HCT116 (cell line): ENCODE measurements at regions of chr12 and their contacts with region 1.

Region 1: GRCh38 chr12:3299929-3300832 is 190.8 kb upstream of the PRMT8 start:
- DNase-seq: peak; percentile 92
- ATAC-seq: peak; percentile 75
- H3K4me3 ChIP-seq: peak overlapping the region; percentile 28 to 40
- H3K27ac ChIP-seq: peak overlapping the region; percentile 83
- H3K4me1 ChIP-seq: peaks cover 24 to 39% of the 10 kb centered on the region in 2 experiments
- H3K27me3 ChIP-seq: no peaks in the 10 kb centered on the region
- CTCF ChIP-seq: peak; percentile 78 to 97 (median 95)
- POLR2A ChIP-seq: no peak
- RAD21 ChIP-seq: peak; percentile 93

Region 2: GRCh38 chr12:3060778-3061458 is 239.3 kb before region 1 on chr12:
- CTCF ChIA-PET with region 1: no interaction called
- POLR2A ChIA-PET with region 1: no interaction called
- RAD21 ChIA-PET with region 1: no interaction called
- intact Hi-C with region 1: no loop called
- DNase-seq: no peak
- ATAC-seq: no peak
- H3K4me3 ChIP-seq: no peak overlapping the region
- H3K27ac ChIP-seq: no peak overlapping the region
- H3K4me1 ChIP-seq: peaks cover 8 to 10% of the 10 kb centered on the region in 2 experiments
- H3K27me3 ChIP-seq: peaks cover 8% of the 10 kb centered on the region; the same call in 1 of the 2 replicates
- CTCF ChIP-seq: no peak
- POLR2A ChIP-seq: no peak
- RAD21 ChIP-seq: no peak

Region 3: DNA sequence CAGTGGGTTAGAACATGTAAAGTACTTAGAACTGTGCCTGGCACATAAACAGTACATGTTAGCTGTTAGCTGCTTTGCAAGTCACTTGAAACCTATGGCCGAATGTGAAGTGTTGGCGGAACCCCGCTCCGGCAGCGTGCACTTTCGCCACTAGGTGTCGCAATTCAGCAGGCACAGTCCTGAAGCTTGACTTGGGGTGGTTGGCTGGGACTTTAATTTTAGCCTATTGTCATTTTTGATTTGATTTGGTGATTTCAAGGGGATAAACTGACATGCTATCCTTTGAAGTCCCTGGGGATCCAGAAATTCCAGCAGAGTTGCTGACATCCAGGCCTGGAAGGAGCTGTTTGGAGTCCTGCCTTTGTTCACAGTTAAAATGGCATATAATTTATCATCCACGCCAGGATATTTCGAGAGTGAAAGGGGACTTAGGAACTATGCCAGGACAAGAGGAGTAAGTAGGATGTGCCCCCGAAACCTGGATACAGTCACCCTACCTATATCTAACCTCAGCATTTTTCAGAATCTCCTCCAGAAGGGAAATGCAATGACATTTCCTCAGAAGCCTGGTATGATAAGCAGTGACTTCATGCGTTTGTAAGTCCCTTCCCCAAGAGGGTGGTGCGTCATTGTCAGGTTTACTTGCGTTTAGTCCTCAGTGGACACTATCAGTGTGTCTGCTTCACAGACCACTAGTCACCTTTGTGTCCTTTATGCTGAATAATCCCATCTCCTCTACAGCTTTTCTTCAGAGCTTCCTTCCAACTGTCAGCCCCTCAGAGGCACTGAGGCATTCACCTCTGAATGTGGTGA is 226.5 kb before region 1 on chr12:
- CTCF ChIA-PET with region 1: interaction called, 11 read pairs
- POLR2A ChIA-PET with region 1: interaction called, 4 read pairs
- RAD21 ChIA-PET with region 1: no interaction called
- intact Hi-C with region 1: no loop called
- DNase-seq: peak; percentile 72
- ATAC-seq: peak; percentile 61
- H3K4me3 ChIP-seq: no peak overlapping the region
- H3K27ac ChIP-seq: no peak overlapping the region
- H3K4me1 ChIP-seq: peaks cover 11 to 27% of the 10 kb centered on the region in 2 experiments; a peak in 3 of 4 replicates
- H3K27me3 ChIP-seq: no peaks in the 10 kb centered on the region; the same call in 1 of the 2 replicates
- CTCF ChIP-seq: peak; percentile 74 to 99 (median 99); a peak in 5 of 6 replicates
- POLR2A ChIP-seq: no peak
- RAD21 ChIP-seq: peak; percentile 83

Region 4: GRCh38 chr12:3313675-3314663 is 13.8 kb after region 1 on chr12:
- CTCF ChIA-PET with region 1: interaction called, 51 read pairs
- POLR2A ChIA-PET with region 1: interaction called, 6 read pairs
- RAD21 ChIA-PET with region 1: interaction called, 7 to 14 read pairs
- intact Hi-C with region 1: no loop called
- DNase-seq: no peak
- ATAC-seq: peak; percentile 53
- H3K4me3 ChIP-seq: no peak overlapping the region
- H3K27ac ChIP-seq: no peak overlapping the region
- H3K4me1 ChIP-seq: peaks cover 55 to 83% of the 10 kb centered on the region in 2 experiments
- H3K27me3 ChIP-seq: no peaks in the 10 kb centered on the region
- CTCF ChIP-seq: peak in 2 of 3 experiments; percentile 51 to 56; a peak in 5 of 6 replicates
- POLR2A ChIP-seq: no peak
- RAD21 ChIP-seq: peak; percentile 52

Region 5: GRCh38 chr12:3453990-3454675 is 154.0 kb after region 1 on chr12:
- CTCF ChIA-PET with region 1: interaction called, 43 read pairs
- POLR2A ChIA-PET with region 1: interaction called, 3 read pairs
- RAD21 ChIA-PET with region 1: interaction called, 4 to 7 read pairs
- intact Hi-C with region 1: no loop called
- DNase-seq: peak; percentile 70
- ATAC-seq: peak; percentile 75
- H3K4me3 ChIP-seq: peak overlapping the region; percentile 13 to 45
- H3K27ac ChIP-seq: peak overlapping the region; percentile 30; the same call in 1 of the 2 replicates
- H3K4me1 ChIP-seq: peaks cover 33 to 45% of the 10 kb centered on the region in 2 experiments
- H3K27me3 ChIP-seq: peaks cover 4% of the 10 kb centered on the region; the same call in 1 of the 2 replicates
- CTCF ChIP-seq: no peak
- POLR2A ChIP-seq: no peak
- RAD21 ChIP-seq: 0 out of 2 replicates have a peak, but pooled peaks have one; percentile 12

Region 6: GRCh38 chr12:3644104-3644503 is 343.9 kb after region 1 on chr12:
- CTCF ChIA-PET with region 1: interaction called, 7 read pairs
- POLR2A ChIA-PET with region 1: no interaction called
- RAD21 ChIA-PET with region 1: no interaction called
- intact Hi-C with region 1: loop called (anchors 1 kb)
- DNase-seq: no peak
- ATAC-seq: no peak
- H3K4me3 ChIP-seq: no peak overlapping the region
- H3K27ac ChIP-seq: no peak overlapping the region
- H3K4me1 ChIP-seq: no peaks in the 10 kb centered on the region
- H3K27me3 ChIP-seq: no peaks in the 10 kb centered on the region
- CTCF ChIP-seq: 0 out of 6 replicates have a peak, but pooled peaks of 1 of the 3 experiments have one; percentile 11
- POLR2A ChIP-seq: no peak
- RAD21 ChIP-seq: peak; percentile 26; the same call in 1 of the 2 replicates

Region 7: DNA sequence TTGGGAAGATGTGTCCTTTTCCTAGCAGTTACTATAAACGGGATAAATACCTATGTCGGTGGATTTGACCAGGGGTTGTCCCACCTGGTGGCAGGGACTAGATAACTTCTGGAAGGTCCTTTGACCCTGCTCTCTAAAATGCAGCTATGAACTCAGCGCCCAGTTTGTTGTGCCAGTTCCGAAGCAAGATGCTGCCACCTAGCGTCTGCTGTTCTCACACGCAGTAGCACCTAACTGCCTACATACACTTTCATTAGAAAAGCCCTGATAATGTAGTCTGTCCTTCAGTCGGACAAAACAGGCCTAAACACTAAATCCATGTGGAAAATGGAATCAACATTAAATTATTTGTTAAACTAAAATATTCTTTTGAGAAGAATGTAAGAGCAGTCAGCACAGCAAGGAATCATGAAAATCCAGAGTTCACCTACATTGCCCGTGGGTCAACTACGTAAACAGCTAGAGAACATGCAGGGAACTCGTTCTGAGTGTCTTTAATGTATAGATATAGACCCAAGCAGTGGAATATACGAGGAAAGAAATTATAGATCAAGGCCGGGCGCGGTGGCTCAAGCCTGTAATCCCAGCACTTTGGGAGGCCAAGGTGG is 503.8 kb after region 1 on chr12:
- CTCF ChIA-PET with region 1: interaction called, 126 read pairs
- POLR2A ChIA-PET with region 1: interaction called, 4 read pairs
- RAD21 ChIA-PET with region 1: interaction called, 8 to 14 read pairs
- intact Hi-C with region 1: loop called (anchors 1 kb)
- DNase-seq: peak; percentile 64
- ATAC-seq: peak; percentile 98
- H3K4me3 ChIP-seq: no peak overlapping the region
- H3K27ac ChIP-seq: no peak overlapping the region
- H3K4me1 ChIP-seq: no peaks in the 10 kb centered on the region
- H3K27me3 ChIP-seq: peaks cover 22% of the 10 kb centered on the region
- CTCF ChIP-seq: peak; percentile 74 to 95 (median 93)
- POLR2A ChIP-seq: no peak
- RAD21 ChIP-seq: peak; percentile 86